ENCODE measurements at regions of chr12 and their contacts with region 1.

Region 1: GRCh38 chr12:6778574-6779550 is 6.5 kb downstream of the LAG3 start:
- DNase-seq: peak; percentile 98 to 99
- H3K4me3 ChIP-seq: peak overlapping the region in 1 of 3 donors; percentile 31
- H3K27ac ChIP-seq: peak overlapping the region in 1 of 3 donors; percentile 60
- H3K4me1 ChIP-seq: peaks cover 6 to 7% of the 10 kb centered on the region in 2 donors
- H3K27me3 ChIP-seq: no peaks in the 10 kb centered on the region
- CTCF ChIP-seq: peak; percentile 69 to 99 (median 98)
- POLR2A ChIP-seq: no peak

Region 2: DNA sequence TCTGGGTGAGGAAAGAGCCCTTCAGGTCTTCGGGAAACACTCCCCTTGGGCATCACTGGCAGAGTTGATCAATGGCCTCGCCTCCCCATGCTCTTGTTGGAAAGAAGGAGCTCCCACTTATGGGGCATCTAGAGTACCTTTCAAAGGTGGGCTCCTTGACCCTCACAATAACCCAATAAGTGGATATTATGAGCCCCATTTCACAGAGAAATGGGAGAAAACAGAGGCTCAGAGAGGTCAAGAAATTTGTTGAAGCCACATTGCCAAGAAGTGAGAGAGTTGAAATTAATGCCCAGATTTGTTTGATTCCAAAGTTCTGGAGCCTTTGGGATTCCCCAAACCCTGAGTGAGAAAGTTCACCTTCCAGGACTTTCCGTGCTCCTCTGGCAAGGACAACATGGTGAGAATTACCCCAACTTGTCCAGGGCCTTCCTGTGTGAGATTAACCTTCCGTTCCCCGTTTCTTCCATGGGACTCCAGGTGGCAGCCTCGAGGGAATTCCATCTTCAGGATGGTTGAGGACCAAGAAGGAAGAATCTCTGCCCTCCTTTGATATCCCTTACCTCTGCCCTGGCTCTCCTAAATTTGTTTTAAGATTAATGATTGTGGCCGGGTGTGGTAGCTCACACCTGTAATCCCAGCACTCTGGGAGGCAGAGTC is 164.2 kb before region 1 on chr12:
- intact Hi-C with region 1: loop called (anchors 5 kb)
- DNase-seq: no peak
- H3K4me3 ChIP-seq: no peak overlapping the region
- H3K27ac ChIP-seq: peak overlapping the region; percentile 90 to 98 (median 97)
- H3K4me1 ChIP-seq: peaks cover 23 to 34% of the 10 kb centered on the region in 2 donors
- H3K27me3 ChIP-seq: no peaks in the 10 kb centered on the region
- CTCF ChIP-seq: no peak
- POLR2A ChIP-seq: no peak

Region 3: DNA sequence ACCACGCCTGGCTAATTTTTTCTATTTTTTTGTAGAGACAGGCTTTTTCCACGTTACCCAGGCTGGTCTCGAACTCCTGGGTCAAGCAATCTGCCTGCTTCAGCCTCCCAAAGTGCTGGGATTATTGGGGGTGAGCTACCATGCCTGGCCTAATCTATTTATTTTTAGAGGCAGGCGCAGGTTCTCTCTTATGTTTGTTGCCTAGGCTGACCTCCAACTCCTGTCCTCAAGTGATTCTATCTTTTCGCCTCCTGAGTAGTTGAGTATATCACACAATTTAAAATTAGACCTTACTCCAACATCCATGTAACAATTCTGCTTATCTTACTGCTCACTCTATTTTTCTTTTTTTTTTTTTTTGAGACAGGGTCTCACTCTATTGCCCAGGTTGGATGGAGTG is 124.9 kb before region 1 on chr12:
- intact Hi-C with region 1: no loop called
- DNase-seq: no peak
- H3K4me3 ChIP-seq: no peak overlapping the region
- H3K27ac ChIP-seq: no peak overlapping the region
- H3K4me1 ChIP-seq: no peaks in the 10 kb centered on the region
- H3K27me3 ChIP-seq: no peaks in the 10 kb centered on the region
- CTCF ChIP-seq: no peak
- POLR2A ChIP-seq: no peak

Region 4: DNA sequence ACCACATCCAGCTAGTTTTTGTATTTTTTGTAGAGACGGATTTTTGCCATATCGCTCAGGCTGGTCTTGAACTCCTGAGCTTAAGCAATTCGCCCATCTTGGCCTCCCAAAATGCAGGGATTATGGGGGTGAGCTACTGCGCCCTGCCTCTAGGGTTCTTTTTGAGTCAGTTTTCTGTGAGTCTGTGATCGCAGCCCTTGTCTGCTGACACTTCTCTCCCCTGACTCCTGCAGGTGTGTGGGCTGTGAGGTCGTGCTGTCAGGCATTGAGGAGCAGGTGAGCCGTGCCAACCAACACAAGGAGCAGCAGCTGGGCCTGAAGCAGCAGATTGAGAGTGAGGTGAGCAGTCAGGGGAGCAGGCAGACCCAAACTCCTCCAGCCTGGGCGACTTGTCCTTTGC is 48.7 kb before region 1 on chr12:
- intact Hi-C with region 1: loop called (anchors 5 kb)
- DNase-seq: no peak
- H3K4me3 ChIP-seq: no peak overlapping the region
- H3K27ac ChIP-seq: no peak overlapping the region
- H3K4me1 ChIP-seq: peaks cover 0 to 2% of the 10 kb centered on the region in 2 donors
- H3K27me3 ChIP-seq: no peaks in the 10 kb centered on the region
- CTCF ChIP-seq: no peak
- POLR2A ChIP-seq: no peak

Region 5: GRCh38 chr12:6753772-6754356 is 25.0 kb before region 1 on chr12:
- intact Hi-C with region 1: loop called (anchors 2 kb)
- DNase-seq: no peak
- H3K4me3 ChIP-seq: no peak overlapping the region
- H3K27ac ChIP-seq: peak overlapping the region; percentile 61 to 99 (median 98)
- H3K4me1 ChIP-seq: peaks cover 4 to 16% of the 10 kb centered on the region in 2 donors
- H3K27me3 ChIP-seq: no peaks in the 10 kb centered on the region
- CTCF ChIP-seq: peak; percentile 83 to 99 (median 96)
- POLR2A ChIP-seq: no peak

Region 6: DNA sequence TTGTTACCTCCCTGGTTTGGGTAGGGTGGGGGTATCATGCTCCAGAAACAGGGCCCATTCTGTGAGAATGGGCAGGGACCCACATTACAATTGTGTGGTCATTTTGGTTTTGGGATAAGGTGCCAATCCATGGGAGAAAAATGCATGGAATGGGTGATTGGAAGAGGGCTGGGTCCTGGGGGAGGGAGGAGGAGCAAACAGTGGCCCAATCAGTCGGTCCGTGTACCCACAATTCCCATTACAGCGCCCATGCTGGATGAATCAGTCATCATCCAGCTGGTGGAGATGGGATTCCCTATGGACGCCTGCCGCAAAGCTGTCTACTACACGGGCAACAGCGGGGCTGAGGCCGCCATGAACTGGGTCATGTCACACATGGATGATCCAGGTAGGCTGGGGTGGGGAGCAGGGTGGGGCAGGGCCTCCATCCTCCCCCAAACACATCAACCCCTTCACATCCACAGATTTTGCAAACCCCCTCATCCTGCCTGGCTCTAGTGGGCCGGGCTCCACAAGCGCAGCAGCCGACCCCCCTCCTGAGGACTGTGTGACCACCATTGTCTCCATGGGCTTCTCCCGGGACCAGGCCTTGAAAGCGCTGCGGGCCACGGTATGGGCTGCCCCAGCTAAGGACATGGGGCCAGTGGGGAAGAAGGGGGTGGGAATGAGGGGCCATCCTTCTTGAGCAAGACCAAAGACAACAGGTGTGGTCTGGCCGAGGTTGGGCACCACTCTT is 84.9 kb after region 1 on chr12:
- intact Hi-C with region 1: no loop called
- DNase-seq: no peak
- H3K4me3 ChIP-seq: no peak overlapping the region
- H3K27ac ChIP-seq: no peak overlapping the region
- H3K4me1 ChIP-seq: peaks cover 10 to 11% of the 10 kb centered on the region in 2 donors
- H3K27me3 ChIP-seq: no peaks in the 10 kb centered on the region
- CTCF ChIP-seq: no peak
- POLR2A ChIP-seq: no peak